Heart left ventricle (tissue), 16 donors: ENCODE measurements at regions of chr17 and their contacts with region 1.

Region 1: GRCh38 chr17:8138672-8139371 is 13.4 kb downstream of the PER1 start:
- DNase-seq: peak; percentile 94 to 97 (median 94)
- ATAC-seq: peak; percentile 90 to 93 (median 91)
- H3K4me3 ChIP-seq: peak overlapping the region in 8 of 12 donors; percentile 2 to 48 (median 33)
- H3K27ac ChIP-seq: peak overlapping the region; percentile 31 to 89 (median 81)
- H3K4me1 ChIP-seq: peaks cover 0 to 45% (median 15%) of the 10 kb centered on the region in 12 donors
- H3K27me3 ChIP-seq: no peaks in the 10 kb centered on the region
- CTCF ChIP-seq: peak; percentile 82 to 95 (median 90)
- POLR2A ChIP-seq: peak in 1 of 2 donors; percentile 75

Region 2: DNA sequence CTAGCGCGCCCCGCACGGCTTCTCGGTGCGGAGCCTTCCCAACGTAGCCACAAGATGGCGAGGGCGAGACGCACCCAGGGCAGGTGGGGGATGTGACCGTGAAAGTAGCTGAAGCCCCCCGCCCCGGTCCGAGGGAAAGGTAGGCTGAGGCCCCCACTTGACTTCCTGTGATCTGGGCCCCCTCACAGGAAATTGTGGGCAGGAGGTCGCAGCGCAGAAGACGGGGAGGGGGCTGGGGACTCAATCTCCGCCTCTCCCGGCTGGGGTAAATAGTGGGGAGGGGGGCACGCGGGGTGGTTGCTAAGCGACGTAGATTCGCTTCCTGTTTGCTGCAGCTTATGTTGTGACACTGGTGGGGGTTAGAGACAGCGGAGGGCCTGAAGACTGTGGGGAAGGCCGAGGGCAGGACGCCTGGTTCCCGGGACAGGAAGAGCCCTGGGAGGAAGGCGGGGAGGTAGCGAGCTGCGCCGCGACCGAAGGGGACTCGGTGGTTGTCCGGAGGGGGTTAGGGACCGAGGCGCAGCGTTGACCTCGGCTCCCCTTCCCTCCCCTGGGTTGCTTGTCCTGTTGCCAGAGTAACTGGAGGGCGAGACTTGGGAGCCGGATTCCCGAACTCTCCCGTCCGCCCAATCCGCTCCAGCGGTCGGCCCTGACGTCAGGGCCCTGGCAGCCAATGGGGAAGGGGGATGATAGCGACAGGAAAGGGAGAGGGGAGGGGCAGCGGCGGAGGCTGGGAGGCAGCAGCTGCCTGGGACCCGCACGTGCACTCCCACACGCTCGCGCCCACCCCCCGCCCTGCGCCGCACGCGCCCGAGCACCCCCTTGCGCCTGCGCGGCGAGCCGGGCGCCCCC is 303.6 kb before region 1 on chr17:
- intact Hi-C with region 1: loop called in 2 of 10 experiments (anchors 5 to 10 kb)
- DNase-seq: peak; percentile 98 to 99 (median 99)
- ATAC-seq: peak; percentile 79 to 84 (median 82)
- H3K4me3 ChIP-seq: peak overlapping the region; percentile 59 to 99 (median 80)
- H3K27ac ChIP-seq: peak overlapping the region; percentile 86 to 100 (median 98)
- H3K4me1 ChIP-seq: peaks cover 0 to 56% (median 35%) of the 10 kb centered on the region in 12 donors
- H3K27me3 ChIP-seq: no peaks in the 10 kb centered on the region
- CTCF ChIP-seq: peak; percentile 56 to 94 (median 80)
- POLR2A ChIP-seq: peak; percentile 31 to 71

Region 3: DNA sequence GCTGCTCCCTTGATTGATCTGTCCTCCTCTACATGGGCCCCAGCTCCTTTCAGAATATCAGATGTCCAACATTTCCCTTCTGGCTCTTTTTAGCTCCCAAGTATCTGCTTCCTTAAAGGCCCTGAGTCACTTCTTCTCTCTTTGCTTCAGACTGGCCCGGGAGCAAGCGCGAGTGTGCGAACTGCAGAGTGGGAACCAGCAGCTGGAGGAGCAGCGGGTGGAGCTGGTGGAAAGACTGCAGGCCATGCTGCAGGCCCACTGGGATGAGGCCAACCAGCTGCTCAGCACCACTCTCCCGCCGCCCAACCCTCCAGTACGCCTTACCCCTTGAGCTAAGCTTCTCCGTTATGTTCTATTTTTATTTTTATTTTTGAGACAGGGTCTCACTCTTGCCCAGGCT is 194.5 kb before region 1 on chr17:
- intact Hi-C with region 1: no loop called
- DNase-seq: peak in 1 of 5 donors; percentile 36
- ATAC-seq: no peak
- H3K4me3 ChIP-seq: no peak overlapping the region
- H3K27ac ChIP-seq: no peak overlapping the region
- H3K4me1 ChIP-seq: no peaks in the 10 kb centered on the region
- H3K27me3 ChIP-seq: no peaks in the 10 kb centered on the region
- CTCF ChIP-seq: no peak
- POLR2A ChIP-seq: no peak

Region 4: GRCh38 chr17:8151123-8151640 is 12.4 kb after region 1 on chr17:
- intact Hi-C with region 1: loop called in 5 of 10 experiments (anchors 1 to 2 kb)
- DNase-seq: peak; percentile 94 to 97 (median 96)
- ATAC-seq: peak; percentile 16 to 53 (median 44)
- H3K4me3 ChIP-seq: peak overlapping the region; percentile 51 to 97 (median 82)
- H3K27ac ChIP-seq: peak overlapping the region; percentile 98 to 100 (median 100)
- H3K4me1 ChIP-seq: peaks cover 21 to 65% (median 47%) of the 10 kb centered on the region in 12 donors
- H3K27me3 ChIP-seq: no peaks in the 10 kb centered on the region
- CTCF ChIP-seq: no peak
- POLR2A ChIP-seq: peak; percentile 65 to 67

Region 5: DNA sequence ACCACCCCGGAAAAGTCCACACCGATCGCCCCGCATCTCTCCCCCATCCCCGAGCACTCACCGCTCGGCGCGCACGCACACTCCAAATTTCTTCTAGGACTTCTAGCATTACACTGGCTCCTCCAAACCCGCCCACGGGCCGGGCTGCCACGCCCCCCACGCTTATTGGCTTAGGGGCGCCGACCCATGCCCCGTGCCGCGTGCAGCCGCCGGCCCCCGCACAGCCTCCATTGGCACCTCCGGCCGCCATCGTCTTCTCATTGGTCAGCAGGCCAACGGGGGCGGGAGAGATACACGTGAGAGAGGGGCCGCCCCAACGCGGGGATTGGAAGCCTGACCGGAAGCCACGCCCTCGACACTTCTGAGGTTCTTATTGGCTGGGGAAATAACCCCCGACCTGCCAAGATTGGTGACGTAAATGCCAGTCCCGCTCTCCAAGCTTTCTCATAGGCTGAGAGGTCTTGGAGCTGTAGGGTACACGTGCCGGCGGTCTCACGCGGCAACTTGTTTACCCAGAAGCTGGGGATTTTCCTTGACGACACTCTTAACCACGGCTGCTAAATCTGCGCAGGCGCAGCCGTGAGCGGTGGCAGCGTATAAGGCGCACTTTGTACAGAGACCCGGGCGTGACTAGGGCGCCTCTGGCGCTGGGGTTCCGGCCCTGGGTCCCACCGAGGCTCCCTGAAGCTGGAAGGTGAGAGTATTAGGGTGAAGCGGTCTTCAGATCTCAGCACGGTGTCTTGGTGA is 17.6 kb after region 1 on chr17:
- intact Hi-C with region 1: loop called in 6 of 10 experiments (anchors 1 to 2 kb)
- DNase-seq: peak; percentile 100
- ATAC-seq: peak; percentile 59 to 77 (median 61)
- H3K4me3 ChIP-seq: peak overlapping the region; percentile 69 to 97 (median 86)
- H3K27ac ChIP-seq: peak overlapping the region; percentile 98 to 100 (median 100)
- H3K4me1 ChIP-seq: peaks cover 20 to 79% (median 36%) of the 10 kb centered on the region in 12 donors
- H3K27me3 ChIP-seq: no peaks in the 10 kb centered on the region
- CTCF ChIP-seq: peak in 3 of 12 donors; percentile 16 to 36 (median 28)
- POLR2A ChIP-seq: peak; percentile 97 to 100

Region 6: DNA sequence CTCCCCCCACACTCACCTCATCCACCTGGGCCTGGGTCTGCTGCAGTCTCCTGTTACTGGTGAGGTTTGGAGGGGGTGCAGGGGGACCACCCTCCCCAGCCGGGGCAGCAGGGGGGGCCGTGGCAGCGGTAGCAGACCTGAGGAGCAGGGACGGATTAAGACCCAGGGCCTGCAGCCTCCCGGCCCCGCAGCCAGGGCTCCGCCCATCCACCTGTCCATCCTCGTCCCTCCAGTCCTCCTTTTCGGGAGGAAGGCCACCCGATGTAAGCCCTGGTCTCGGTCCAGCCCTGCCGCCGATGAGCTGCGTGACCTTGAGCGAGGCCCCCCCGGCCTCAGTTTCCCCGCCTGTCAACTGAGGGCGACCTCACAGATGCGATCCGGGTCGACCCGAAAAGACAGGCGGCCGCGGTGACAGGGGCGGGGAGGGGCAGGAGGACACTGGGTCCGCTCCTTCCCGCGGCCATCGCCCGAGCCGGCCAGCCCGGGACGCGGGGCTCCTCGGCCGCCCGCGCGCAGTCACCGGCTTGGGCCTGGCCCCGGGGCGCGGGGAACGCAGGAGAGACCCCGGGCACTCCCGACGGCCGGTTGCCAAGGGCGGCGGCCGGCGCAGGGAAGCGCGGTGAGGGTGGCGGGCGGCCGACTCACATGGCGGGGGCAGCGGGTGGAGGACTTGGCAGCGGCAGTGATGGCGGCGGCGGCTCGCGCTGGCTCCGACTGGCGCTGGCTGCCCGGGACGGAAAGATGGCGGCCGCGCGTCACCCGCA is 23.6 kb after region 1 on chr17 and contains the start of gene VAMP2:
- intact Hi-C with region 1: loop called in 4 of 10 experiments (anchors 1 kb)
- DNase-seq: peak; percentile 81 to 92 (median 89)
- ATAC-seq: peak in 3 of 4 donors; percentile 46 to 69 (median 66)
- H3K4me3 ChIP-seq: peak within 1 kb of the TSS; percentile 82 to 100 (median 99)
- H3K27ac ChIP-seq: peak within 1 kb of the TSS; percentile 95 to 100 (median 100)
- H3K4me1 ChIP-seq: peaks cover 22 to 62% (median 42%) of the 10 kb centered on the region in 12 donors
- H3K27me3 ChIP-seq: no peaks in the 10 kb centered on the region
- CTCF ChIP-seq: no peak
- POLR2A ChIP-seq: peak; percentile 60 to 79
- total RNA-seq, gene VAMP2: 21.5 to 67.2 (median 51.1) TPM